Endothelial cell of umbilical vein (primary cell): ENCODE measurements at regions of chr10 and their contacts with region 1.

Region 1: DNA sequence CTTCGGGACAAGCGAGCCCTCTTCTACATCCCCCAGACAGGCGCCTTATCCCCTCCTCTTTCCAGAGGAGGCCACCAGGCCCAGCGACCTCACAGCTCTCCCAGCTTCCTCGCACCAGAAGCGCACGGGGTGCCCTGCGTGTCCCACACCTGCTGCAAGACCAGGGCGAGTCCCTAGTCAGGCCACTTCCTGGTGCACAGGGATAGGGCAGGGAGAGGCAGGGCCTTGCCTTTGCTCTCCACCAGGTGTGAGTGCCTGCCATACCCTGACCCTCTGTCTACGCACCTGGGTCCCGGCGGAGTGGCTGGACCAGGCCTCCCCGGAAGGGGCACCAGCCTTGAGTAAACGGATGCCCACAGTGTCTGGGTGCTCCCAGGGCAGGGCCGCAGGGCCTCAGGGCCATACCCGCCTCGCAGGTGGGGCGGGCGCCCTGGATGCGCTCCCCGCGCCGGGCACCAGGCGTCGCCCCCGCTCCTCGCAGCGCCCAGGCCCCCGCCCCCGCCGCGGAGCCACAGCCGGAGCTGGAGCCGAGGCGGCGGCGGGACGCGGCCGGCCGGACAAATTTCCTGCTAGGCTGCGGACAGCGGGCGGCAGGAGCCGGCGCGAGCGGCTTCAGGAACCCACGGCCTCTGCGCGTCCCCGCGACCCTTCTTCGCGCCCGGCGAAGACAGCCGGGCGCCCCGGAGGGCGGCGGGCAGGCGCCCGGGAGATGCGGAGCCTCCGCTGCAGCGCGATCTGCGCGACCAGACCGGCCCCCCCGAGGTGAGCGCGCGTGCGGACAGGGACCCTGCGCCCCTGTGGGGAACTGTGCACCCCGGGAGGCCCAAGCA is at the start of gene PTPRE:
- DNase-seq: peak; percentile 69
- H3K4me3 ChIP-seq: peak within 1 kb of the TSS; percentile 32 to 78 (median 61)
- H3K27ac ChIP-seq: peak within 1 kb of the TSS; percentile 67
- H3K4me1 ChIP-seq: peaks cover 20% of the 10 kb centered on the region
- H3K27me3 ChIP-seq: no peaks in the 10 kb centered on the region
- CTCF ChIP-seq: peak; percentile 72 to 92
- POLR2A ChIP-seq: peak; percentile 24
- total RNA-seq, gene PTPRE: 114 and 116 TPM in 2 replicates

Region 2: GRCh38 chr10:127872871-127873600 is 33.7 kb before region 1 on chr10:
- CTCF ChIA-PET with region 1: interaction called, 4 read pairs
- POLR2A ChIA-PET with region 1: no interaction called
- dilution Hi-C with region 1: no loop called
- intact Hi-C with region 1: loop called (anchors 1 kb)
- DNase-seq: peak; percentile 25
- H3K4me3 ChIP-seq: no peak overlapping the region
- H3K27ac ChIP-seq: no peak overlapping the region
- H3K4me1 ChIP-seq: peaks cover 5% of the 10 kb centered on the region
- H3K27me3 ChIP-seq: peaks cover 4 to 19% of the 10 kb centered on the region in 2 experiments
- CTCF ChIP-seq: peak; percentile 20 to 34
- POLR2A ChIP-seq: no peak

Region 3: GRCh38 chr10:127928023-127928806 is 21.5 kb after region 1 on chr10:
- CTCF ChIA-PET with region 1: interaction called, 63 read pairs
- POLR2A ChIA-PET with region 1: no interaction called
- dilution Hi-C with region 1: no loop called
- intact Hi-C with region 1: no loop called
- DNase-seq: peak; percentile 82
- H3K4me3 ChIP-seq: peak overlapping the region in 1 of 3 experiments; percentile 23
- H3K27ac ChIP-seq: peak overlapping the region; percentile 84
- H3K4me1 ChIP-seq: peaks cover 41% of the 10 kb centered on the region
- H3K27me3 ChIP-seq: no peaks in the 10 kb centered on the region
- CTCF ChIP-seq: no peak
- POLR2A ChIP-seq: no peak

Region 4: GRCh38 chr10:127968027-127968441 is 61.3 kb after region 1 on chr10:
- CTCF ChIA-PET with region 1: interaction called, 21 read pairs
- POLR2A ChIA-PET with region 1: no interaction called
- dilution Hi-C with region 1: no loop called
- intact Hi-C with region 1: no loop called
- DNase-seq: peak; percentile 62
- H3K4me3 ChIP-seq: no peak overlapping the region
- H3K27ac ChIP-seq: peak overlapping the region; percentile 70
- H3K4me1 ChIP-seq: peaks cover 20% of the 10 kb centered on the region
- H3K27me3 ChIP-seq: no peaks in the 10 kb centered on the region
- CTCF ChIP-seq: no peak
- POLR2A ChIP-seq: no peak

Region 5: DNA sequence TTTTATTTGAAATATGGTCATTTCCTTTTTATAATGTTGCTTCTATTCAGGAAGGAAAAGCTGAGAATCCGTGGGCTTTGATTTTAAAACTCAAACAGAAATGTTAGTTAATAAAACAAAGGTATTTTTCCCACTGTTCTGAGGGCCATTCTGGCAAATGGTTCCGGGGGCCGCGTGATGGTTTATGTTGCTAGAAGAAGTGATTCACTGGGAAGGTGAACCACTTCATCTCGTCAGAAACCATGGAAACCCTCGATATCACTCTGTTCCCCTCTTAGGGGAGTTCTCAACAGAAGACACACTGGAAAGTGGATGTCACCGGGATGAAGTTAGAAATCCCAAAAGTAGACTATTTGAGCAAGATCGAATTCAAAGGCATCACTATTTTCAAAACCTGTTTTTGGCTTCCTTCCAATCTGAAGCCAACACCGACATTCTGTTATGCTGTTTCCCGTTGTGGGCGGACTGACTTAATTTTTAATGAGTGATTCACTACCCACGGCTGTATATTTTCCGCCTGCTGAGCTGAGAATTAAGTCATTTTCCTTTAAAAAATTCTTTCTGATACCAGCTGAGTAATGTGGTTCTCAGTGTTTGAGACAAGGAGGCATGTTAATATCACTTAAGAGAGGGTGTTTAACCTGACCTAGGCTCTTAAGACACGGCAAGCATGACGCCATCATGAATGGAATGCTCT is 84.2 kb after region 1 on chr10:
- CTCF ChIA-PET with region 1: interaction called, 73 read pairs
- POLR2A ChIA-PET with region 1: interaction called, 5 read pairs
- dilution Hi-C with region 1: no loop called
- intact Hi-C with region 1: loop called (anchors 1 kb)
- DNase-seq: peak; percentile 97
- H3K4me3 ChIP-seq: peak overlapping the region in 1 of 3 experiments; percentile 83
- H3K27ac ChIP-seq: peak overlapping the region; percentile 94
- H3K4me1 ChIP-seq: peaks cover 72% of the 10 kb centered on the region
- H3K27me3 ChIP-seq: no peaks in the 10 kb centered on the region
- CTCF ChIP-seq: no peak
- POLR2A ChIP-seq: peak; percentile 60

Region 6: DNA sequence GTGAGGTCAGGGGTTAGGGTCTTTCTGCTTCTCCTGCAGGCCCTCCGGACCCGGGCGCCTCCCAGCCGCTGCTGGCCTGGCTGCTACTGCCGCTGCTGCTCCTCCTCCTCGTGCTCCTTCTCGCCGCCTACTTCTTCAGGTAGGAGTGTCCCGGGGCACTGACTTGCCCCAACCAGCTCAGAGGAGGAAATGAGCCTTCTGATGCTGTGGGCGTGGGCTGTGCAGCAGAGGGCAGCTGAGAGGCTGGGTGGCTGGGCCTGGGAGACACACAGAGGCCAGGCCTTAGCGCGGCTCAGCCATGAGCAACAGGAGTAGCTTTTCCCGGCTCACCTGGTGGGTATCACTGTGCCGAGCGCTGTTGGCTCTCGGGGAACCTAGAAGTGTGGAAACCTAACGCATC is 140.6 kb after region 1 on chr10:
- CTCF ChIA-PET with region 1: interaction called, 14 read pairs
- POLR2A ChIA-PET with region 1: no interaction called
- dilution Hi-C with region 1: no loop called
- intact Hi-C with region 1: no loop called
- DNase-seq: peak; percentile 80
- H3K4me3 ChIP-seq: no peak overlapping the region
- H3K27ac ChIP-seq: peak overlapping the region; percentile 58
- H3K4me1 ChIP-seq: peaks cover 17% of the 10 kb centered on the region
- H3K27me3 ChIP-seq: no peaks in the 10 kb centered on the region
- CTCF ChIP-seq: no peak
- POLR2A ChIP-seq: peak; percentile 28

Region 7: DNA sequence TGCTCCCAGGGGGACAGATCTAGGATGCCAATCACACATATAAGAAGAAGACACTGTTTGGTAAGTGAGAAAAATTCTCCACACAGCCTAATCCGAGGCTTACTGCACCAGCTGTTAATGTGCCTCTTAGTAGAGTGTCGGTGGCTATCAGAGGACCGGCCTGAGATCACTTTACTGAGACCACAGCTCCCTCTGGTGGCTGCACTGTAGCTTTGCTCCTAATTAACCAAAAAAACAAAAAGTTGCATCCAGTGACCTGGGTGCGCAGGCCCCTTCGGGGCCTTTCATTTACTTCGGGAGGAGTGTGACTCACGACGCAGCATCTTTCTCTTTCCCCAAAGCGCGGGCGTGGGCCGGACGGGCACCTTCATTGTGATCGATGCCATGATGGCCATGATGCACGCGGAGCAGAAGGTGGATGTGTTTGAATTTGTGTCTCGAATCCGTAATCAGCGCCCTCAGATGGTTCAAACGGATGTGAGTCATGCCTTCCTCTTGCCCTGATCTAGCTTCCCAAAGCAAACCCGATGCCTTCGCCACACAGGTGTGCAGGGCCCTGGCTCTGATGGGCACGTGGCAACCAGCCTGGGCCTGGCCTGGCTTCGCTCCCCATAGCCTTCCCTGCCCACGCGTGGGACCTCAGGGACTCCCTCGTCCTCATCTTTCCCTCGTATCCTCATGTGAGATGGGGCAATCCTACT is 162.7 kb after region 1 on chr10:
- CTCF ChIA-PET with region 1: interaction called, 108 read pairs
- POLR2A ChIA-PET with region 1: no interaction called
- dilution Hi-C with region 1: no loop called
- intact Hi-C with region 1: loop called (anchors 1 kb)
- DNase-seq: peak; percentile 68
- H3K4me3 ChIP-seq: no peak overlapping the region
- H3K27ac ChIP-seq: no peak overlapping the region
- H3K4me1 ChIP-seq: peaks cover 2% of the 10 kb centered on the region
- H3K27me3 ChIP-seq: no peaks in the 10 kb centered on the region
- CTCF ChIP-seq: peak; percentile 65 to 67
- POLR2A ChIP-seq: no peak